Psoas muscle (tissue), 8 donors: ENCODE measurements at regions of chr14 and their contacts with region 1.

Region 1: DNA sequence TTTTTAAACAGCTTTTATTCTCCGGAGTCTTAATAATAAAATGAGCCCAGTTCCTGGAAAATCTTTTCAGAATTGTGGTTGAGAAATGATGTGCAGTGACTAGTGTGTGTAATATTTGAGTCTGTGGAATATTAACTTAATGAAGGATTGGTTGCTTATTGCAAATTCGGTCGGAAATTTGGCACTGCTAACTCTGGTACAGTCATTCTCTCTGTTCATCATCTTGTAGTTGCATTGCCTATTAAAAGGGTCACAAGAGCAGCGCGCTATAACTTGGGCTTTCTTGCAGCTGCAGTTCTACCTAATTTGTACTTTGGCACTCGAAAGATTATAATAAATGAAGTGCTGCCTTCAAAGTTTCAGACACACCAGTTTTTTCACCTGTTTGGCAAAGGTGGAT is 146.0 kb downstream of the FLRT2 start:
- DNase-seq: no peak
- ATAC-seq: no peak
- H3K4me3 ChIP-seq: no peak overlapping the region
- H3K27ac ChIP-seq: no peak overlapping the region
- H3K4me1 ChIP-seq: no peaks in the 10 kb centered on the region
- H3K27me3 ChIP-seq: no peaks in the 10 kb centered on the region
- CTCF ChIP-seq: no peak

Region 2: GRCh38 chr14:85662096-85662495 is 13.9 kb before region 1 on chr14:
- intact Hi-C with region 1: loop called in 1 of 2 experiments (anchors 2 kb)
- DNase-seq: no peak
- ATAC-seq: no peak
- H3K4me3 ChIP-seq: no peak overlapping the region
- H3K27ac ChIP-seq: no peak overlapping the region
- H3K4me1 ChIP-seq: no peaks in the 10 kb centered on the region
- H3K27me3 ChIP-seq: no peaks in the 10 kb centered on the region
- CTCF ChIP-seq: no peak